Posterior vena cava (tissue), 2 donors: ENCODE measurements at regions of chr15 and their contacts with region 1.

Region 1: GRCh38 chr15:46644501-46645481 is 1010.0 kb downstream of the SQOR start:
- DNase-seq: no peak

Region 2: DNA sequence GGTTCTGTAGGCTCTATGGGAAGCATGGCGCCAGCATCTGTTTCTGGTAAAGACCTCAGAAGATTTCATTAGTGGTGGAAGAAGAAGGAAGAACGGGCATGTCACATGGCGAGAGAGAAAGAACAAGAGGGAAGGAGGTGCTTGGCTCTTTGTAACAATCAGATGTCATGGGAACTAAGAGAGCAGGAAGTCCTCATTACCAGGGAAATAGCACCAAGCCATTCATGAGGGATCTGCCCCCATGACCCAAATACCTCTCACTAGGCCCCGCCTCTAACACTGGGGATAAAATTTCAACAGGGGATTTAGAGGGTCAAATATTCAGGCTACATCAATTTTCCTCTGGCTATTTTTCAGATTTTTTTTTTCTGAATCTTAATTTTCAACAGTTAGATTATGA is 55.7 kb before region 1 on chr15:
- intact Hi-C with region 1: loop called in 1 of 2 experiments (anchors 10 kb)
- DNase-seq: no peak